H1 (cell line): ENCODE measurements at regions of chr11 and their contacts with region 1.

Region 1: DNA sequence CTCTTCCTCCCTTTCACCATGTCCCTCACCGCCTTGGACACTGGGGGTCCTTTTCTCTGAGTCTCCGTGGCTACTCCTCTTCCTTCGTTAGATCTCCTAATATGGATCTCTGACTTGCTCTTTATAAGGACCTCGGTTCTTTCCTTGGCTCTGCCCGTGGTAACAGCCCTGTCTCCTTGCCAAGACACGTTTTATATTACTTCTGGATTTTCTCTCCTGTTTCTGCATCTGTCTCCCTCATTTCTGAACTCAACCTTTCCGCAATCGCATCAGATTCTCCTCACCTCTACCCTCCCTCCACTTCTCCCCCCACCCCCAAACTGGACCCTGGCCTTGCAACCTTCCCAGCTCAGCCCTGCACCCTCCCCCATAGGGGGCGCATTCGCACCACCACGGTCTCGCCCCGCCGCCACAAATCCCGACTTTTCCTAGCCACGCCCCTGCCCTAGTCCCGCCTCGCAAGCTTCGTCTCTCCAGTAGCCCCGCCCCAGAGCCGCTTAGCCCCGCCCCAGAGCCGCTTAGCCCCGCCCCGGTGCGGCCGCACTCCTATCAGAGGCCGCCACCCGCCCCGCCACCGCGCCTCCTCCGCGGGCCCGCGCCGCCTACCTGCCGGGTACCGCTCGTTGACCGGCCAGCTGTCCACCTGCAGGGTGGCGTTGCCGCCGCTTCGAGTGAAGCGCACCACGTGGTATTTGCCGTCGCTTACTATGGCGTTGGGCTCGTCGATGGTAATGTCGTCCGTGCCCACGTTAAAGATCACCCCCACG is 39.0 kb downstream of the SLC22A12 start:
- DNase-seq: peak; percentile 70 to 100
- H3K4me3 ChIP-seq: peak overlapping the region in 1 of 4 experiments; percentile 5; a peak in 1 of 8 replicates
- H3K27ac ChIP-seq: no peak overlapping the region
- H3K4me1 ChIP-seq: peaks cover 0 to 10% (median 5%) of the 10 kb centered on the region in 4 experiments; a peak in 6 of 7 replicates
- H3K27me3 ChIP-seq: peaks cover 0 to 19% (median 12%) of the 10 kb centered on the region in 4 experiments; a peak in 5 of 7 replicates
- CTCF ChIP-seq: peak; percentile 63 to 87 (median 65)
- EP300 ChIP-seq: no peak
- POLR2A ChIP-seq: no peak
- RAD21 ChIP-seq: peak; percentile 59

Region 2: GRCh38 chr11:64619811-64620380 is 10.1 kb before region 1 on chr11:
- CTCF ChIA-PET with region 1: interaction called, 19 read pairs
- POLR2A ChIA-PET with region 1: interaction called, 4 read pairs
- DNase-seq: no peak
- H3K4me3 ChIP-seq: no peak overlapping the region
- H3K27ac ChIP-seq: no peak overlapping the region
- H3K4me1 ChIP-seq: peaks cover 0 to 15% (median 5%) of the 10 kb centered on the region in 4 experiments; a peak in 5 of 7 replicates
- H3K27me3 ChIP-seq: no peaks in the 10 kb centered on the region
- CTCF ChIP-seq: no peak
- EP300 ChIP-seq: no peak
- POLR2A ChIP-seq: no peak
- RAD21 ChIP-seq: no peak

Region 3: DNA sequence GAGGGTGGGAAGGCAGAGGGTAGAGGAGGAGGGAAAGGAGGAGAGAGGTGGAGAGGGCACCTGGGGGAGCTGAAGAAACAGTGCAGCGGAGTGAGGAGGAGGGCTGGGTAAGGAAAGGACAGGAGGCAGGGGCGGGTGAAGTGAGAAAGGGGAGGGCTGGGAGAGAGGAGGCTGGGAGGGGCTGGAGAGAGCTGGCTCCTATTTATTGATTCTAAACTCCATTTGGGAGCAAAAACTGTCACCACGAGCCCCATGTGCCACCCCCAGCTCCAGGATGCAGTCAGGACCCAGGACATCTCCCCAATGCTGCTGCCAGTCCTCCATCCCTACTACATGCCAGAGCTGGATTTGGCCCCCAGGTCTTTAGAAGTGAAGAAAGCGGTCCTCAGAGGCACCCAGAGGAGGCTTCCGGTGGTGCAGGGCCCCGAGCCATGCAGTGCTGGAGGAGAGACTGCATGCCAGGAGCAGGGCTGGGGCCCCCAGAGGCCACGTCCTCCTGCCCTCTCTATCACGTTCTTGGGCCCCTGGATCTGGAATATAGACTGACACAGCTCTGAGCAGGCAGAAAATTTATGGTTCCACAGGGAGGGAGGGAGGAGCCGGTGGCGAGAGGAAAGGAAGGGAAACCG is 14.8 kb after region 1 on chr11:
- CTCF ChIA-PET with region 1: interaction called, 188 read pairs
- POLR2A ChIA-PET with region 1: interaction called, 5 read pairs
- DNase-seq: peak in 1 of 2 experiments; percentile 67
- H3K4me3 ChIP-seq: peak overlapping the region; percentile 29 to 73 (median 40); a peak in 6 of 8 replicates
- H3K27ac ChIP-seq: no peak overlapping the region
- H3K4me1 ChIP-seq: peaks cover 4 to 23% (median 11%) of the 10 kb centered on the region in 4 experiments
- H3K27me3 ChIP-seq: peaks cover 34 to 55% (median 52%) of the 10 kb centered on the region in 4 experiments
- CTCF ChIP-seq: peak in 2 of 3 experiments; percentile 37 to 43; a peak in 3 of 4 replicates
- EP300 ChIP-seq: no peak
- POLR2A ChIP-seq: no peak
- RAD21 ChIP-seq: peak; percentile 55 to 63